Body of pancreas (tissue), 4 donors: ENCODE measurements at regions of chr5 and their contacts with region 1.

Region 1: DNA sequence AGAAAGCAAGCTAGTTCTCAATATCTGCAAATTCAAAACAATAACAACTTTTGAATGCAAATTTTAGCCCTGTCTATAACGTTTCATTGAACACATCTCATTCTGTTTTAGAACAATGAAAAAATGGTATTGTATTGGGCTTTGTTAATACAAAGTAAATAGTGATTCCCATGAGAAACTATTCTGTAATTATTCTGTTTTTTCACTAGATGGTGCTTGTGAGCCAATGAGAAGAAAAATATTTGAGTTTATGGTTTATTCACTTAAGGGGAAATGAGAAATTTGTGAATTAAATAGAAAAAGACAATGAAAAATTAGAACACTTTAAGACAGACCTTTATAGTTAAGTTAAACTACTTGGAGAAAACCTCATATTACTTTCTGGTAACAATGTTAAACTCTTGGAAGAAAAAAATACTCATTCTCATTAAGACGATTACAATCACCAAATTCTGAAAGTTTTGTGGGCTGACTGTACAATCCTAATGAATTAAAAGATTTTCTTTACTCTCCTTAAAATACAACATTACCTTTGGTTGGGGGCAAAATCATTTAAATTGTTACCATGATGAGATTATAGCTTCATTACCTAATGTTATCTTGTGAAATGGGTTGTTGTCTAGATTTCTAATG is 127.0 kb downstream of the NNT start:
- DNase-seq: no peak
- ATAC-seq: peak; percentile 45
- H3K4me3 ChIP-seq: no peak overlapping the region
- H3K27ac ChIP-seq: no peak overlapping the region
- H3K4me1 ChIP-seq: peaks cover 16% of the 10 kb centered on the region
- H3K27me3 ChIP-seq: no peaks in the 10 kb centered on the region
- CTCF ChIP-seq: peak; percentile 29 to 79 (median 71)
- POLR2A ChIP-seq: no peak

Region 2: GRCh38 chr5:43889233-43889632 is 159.3 kb after region 1 on chr5:
- intact Hi-C with region 1: no loop called
- DNase-seq: no peak
- ATAC-seq: no peak
- H3K4me3 ChIP-seq: no peak overlapping the region
- H3K27ac ChIP-seq: no peak overlapping the region
- H3K4me1 ChIP-seq: peaks cover 6% of the 10 kb centered on the region
- H3K27me3 ChIP-seq: no peaks in the 10 kb centered on the region
- CTCF ChIP-seq: no peak
- POLR2A ChIP-seq: no peak

Region 3: GRCh38 chr5:44329716-44330115 is 599.8 kb after region 1 on chr5:
- intact Hi-C with region 1: loop called (anchors 10 kb)
- DNase-seq: no peak
- ATAC-seq: no peak
- H3K4me3 ChIP-seq: no peak overlapping the region
- H3K27ac ChIP-seq: no peak overlapping the region
- H3K4me1 ChIP-seq: no peaks in the 10 kb centered on the region
- H3K27me3 ChIP-seq: no peaks in the 10 kb centered on the region
- CTCF ChIP-seq: no peak
- POLR2A ChIP-seq: no peak